ENCODE measurements at regions of chr17 and their contacts with region 1.

Region 1: DNA sequence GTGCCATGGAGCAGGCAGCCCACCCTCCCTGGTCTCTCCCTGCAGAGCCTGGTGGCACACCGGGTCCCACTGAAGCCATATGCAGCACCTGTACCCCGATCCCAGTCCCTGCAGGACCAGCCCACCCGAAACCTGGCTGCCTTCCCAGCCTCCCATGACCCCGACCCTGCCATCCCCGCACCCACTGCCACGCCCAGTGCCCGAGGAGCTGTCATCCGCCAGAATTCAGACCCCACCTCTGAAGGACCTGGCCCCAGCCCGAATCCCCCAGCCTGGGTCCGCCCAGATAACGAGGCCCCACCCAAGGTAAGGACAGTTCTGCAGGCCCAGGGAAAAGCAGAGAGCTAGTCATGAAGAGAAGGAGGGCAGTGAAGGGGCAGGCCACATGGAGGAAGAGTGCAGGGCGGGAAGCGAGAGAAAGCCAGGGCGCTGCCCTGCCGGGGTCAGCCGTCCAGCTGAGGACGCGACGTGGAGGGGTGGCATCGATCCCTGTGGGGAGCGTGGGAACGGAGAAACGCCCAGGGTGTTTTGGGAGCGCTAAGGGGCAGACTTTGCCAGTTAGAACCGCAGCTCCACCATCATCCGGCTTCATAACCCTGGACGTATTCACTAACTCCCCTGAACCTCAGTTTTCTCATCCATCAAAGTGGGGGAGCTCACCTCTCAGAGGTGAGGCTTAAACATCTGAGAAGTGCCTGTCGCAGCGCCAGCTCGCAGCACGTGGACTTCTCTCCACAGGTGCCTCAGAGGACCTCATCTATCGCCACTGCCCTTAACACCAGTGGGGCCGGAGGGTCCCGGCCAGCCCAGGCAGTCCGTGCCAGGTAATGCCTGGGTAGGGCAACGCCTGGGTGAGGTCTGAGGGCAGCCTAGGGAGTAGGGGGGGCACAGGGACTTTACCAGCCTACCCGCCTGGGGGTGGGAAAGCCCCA is 7.7 kb upstream of the C17orf107 start:
- DNase-seq: no peak
- H3K4me3 ChIP-seq: no peak overlapping the region
- H3K27ac ChIP-seq: no peak overlapping the region
- H3K27me3 ChIP-seq: no peaks in the 10 kb centered on the region
- CTCF ChIP-seq: no peak

Region 2: GRCh38 chr17:4554997-4555799 is 336.5 kb before region 1 on chr17 and contains the start of gene MYBBP1A:
- intact Hi-C with region 1: loop called in 1 of 2 experiments (anchors 5 kb)
- DNase-seq: peak; percentile 91 to 97 (median 95)
- H3K4me3 ChIP-seq: peak within 1 kb of the TSS; percentile 58 to 99 (median 85)
- H3K27ac ChIP-seq: peak within 1 kb of the TSS in 58 of 59 donors; percentile 29 to 97 (median 88)
- H3K27me3 ChIP-seq: no peaks in the 10 kb centered on the region
- CTCF ChIP-seq: peak in 55 of 56 donors; percentile 18 to 73 (median 53)
- total RNA-seq, gene MYBBP1A: 49.9 to 110 (median 68.5) TPM

Region 3: DNA sequence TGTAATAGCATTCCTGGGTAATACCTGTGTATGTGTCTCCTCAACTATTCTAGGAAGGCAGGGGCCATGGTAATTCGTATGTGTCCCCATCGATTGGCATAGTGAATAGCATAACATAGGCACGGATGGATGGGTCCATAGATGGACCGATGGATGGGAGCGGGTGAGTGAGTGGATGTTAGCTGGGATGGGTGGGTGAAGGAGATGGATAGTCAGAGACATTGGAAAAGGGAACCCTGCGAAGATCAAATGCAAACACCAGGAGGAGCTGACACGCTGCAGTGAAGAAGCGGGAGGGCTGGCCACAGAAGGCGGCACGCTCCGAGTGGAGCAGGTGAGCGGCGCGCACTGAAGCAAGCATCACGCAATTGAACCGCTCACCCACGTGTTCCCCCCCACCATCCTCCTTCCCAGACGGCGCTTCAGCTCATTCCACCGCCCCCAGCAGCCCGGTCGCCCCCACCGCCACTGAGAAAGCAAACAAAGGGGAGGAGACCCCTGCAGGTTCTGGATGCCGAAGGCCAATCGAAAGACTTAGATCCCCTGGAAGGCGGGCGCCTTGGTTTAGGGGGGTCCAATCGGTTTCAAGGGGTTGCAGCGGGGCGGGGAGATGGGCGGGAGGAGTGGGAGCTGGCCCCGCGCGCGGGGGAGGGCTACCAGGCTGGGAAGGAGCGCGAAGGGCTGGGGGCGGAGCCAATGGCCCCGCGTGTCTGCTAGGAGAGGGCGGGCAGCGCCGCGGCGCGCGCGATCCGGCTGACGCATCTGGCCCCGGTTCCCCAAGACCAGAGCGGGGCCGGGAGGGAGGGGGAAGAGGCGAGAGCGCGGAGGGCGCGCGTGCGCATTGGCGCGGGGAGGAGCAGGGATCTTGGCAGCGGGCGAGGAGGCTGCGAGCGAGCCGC is 181.6 kb before region 1 on chr17 and contains the start of gene ARRB2:
- intact Hi-C with region 1: loop called in 1 of 2 experiments (anchors 5 kb)
- DNase-seq: peak; percentile 97 to 99 (median 99)
- H3K4me3 ChIP-seq: peak within 1 kb of the TSS; percentile 65 to 88 (median 80)
- H3K27ac ChIP-seq: peak within 1 kb of the TSS; percentile 7 to 95 (median 89)
- H3K27me3 ChIP-seq: no peaks in the 10 kb centered on the region
- CTCF ChIP-seq: peak in 54 of 56 donors; percentile 28 to 74 (median 54)
- total RNA-seq, gene ARRB2: 66.2 to 131 (median 94.9) TPM

Region 4: DNA sequence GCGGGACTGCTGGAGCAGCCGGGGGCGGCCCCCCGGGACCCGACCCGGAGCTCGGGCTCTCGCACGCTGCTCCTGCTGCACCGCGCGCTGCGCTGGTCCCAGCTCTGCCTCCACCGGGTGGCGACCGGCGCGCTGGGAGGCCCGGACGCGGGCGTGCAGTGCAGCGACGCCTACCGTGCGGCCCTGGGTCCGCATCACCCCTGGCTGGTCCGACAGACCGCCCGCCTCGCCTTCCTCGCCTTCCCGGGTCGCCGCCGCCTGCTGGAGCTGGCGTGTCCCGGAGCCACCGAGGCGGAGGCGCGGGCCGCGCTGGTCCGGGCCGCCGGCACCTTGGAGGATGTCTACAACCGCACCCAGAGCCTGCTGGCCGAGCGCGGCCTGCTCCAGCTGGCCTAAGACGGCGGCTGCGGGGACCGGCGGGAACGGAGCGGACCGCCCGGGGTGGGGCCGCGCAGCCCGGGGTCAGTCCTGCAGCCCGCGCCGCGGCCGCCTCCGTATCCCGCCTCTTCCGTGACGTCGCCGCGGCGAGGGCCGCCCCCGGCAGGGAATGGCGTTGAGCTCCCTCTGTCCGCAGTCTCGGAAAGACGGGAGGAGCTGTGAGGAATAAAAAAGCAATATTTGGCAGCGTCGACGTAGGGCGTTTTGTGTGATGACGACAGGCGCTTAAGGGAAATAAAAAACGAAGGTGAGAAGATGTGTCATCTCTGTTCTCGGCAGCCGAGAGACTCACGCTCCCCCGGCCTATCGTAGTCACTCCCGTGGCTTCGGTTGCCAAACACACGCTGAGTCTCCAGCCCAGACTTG is 101.6 kb before region 1 on chr17:
- intact Hi-C with region 1: loop called (anchors 2 to 5 kb)
- DNase-seq: peak; percentile 62 to 91 (median 86)
- H3K4me3 ChIP-seq: peak overlapping the region; percentile 51 to 92 (median 80)
- H3K27ac ChIP-seq: peak overlapping the region; percentile 79 to 99 (median 98)
- H3K27me3 ChIP-seq: peaks cover 0 to 7% (median 0%) of the 10 kb centered on the region in 45 donors
- CTCF ChIP-seq: peak in 55 of 56 donors; percentile 40 to 97 (median 73)

Region 5: GRCh38 chr17:4796553-4796921 is 95.1 kb before region 1 on chr17:
- intact Hi-C with region 1: loop called in 1 of 2 experiments (anchors 5 kb)
- DNase-seq: peak in 1 of 10 donors; percentile 41
- H3K4me3 ChIP-seq: peak overlapping the region; percentile 62 to 99 (median 84)
- H3K27ac ChIP-seq: peak overlapping the region in 58 of 59 donors; percentile 19 to 96 (median 87)
- H3K27me3 ChIP-seq: no peaks in the 10 kb centered on the region
- CTCF ChIP-seq: no peak

Measured in dorsolateral prefrontal cortex (tissue), 120 donors.